Naive thymus-derived CD4-positive, alpha-beta T cell (primary cell): ENCODE measurements at regions of chr9 and their contacts with region 1.

Region 1: DNA sequence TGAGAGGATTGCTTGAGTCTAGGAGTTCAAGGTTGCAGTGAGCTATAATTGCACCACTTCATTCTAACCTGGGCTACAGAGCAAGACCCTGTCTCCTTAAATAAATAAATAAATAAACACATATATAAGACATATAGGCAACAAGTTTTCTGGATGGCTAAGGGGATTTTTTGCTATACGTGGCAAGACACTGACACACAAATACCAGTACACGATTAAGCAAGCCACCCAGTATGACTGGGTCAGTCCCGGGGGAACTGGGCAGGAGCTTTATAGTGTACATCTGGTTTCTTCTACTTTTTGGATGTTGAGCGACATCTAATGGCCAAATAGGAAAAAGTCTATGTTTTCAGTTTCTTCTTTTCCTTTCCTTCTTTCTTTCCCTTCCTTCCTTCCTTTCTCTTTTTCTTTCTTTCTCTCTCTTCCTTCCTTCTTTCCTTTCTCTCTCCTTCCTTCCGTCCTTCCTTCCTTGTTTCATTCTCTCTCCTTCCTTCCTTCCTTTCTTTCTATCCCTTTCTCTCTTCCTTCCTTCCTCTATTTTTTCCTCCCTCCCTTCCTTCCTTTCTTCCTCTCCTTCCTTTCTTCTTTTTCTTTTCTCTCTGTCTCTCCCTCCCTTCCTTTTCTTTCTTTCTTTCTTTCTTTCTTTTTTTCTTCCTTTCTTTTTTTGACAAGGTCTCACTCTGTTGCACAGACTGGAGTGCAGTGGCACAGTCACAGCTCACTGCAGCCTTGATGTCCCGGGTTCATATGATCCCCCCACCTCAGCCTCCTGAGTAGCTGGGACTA is 47.0 kb upstream of the PLIN2 start:
- DNase-seq: peak; percentile 11 to 51 (median 37)
- ATAC-seq: peak; percentile 91
- H3K4me3 ChIP-seq: no peak overlapping the region
- H3K4me3 Mint-ChIP-seq: peak overlapping the region in 3 of 10 donors; percentile 14 to 70 (median 63)
- H3K27ac ChIP-seq: no peak overlapping the region
- H3K27ac Mint-ChIP-seq: peak overlapping the region in 5 of 9 donors; percentile 52 to 84 (median 62)
- H3K4me1 ChIP-seq: peaks cover 5 to 16% of the 10 kb centered on the region in 2 donors
- H3K4me1 Mint-ChIP-seq: peaks cover 25 to 39% (median 31%) of the 10 kb centered on the region in 7 donors
- H3K27me3 ChIP-seq: no peaks in the 10 kb centered on the region
- H3K27me3 Mint-ChIP-seq: no peaks in the 10 kb centered on the region

Region 2: GRCh38 chr9:18255158-18255629 is 919.1 kb before region 1 on chr9:
- CTCF ChIA-PET with region 1: no interaction called
- POLR2A ChIA-PET with region 1: no interaction called
- intact Hi-C with region 1: loop called in 1 of 2 experiments (anchors 5 kb)
- DNase-seq: peak; percentile 30 to 72 (median 57)
- ATAC-seq: peak; percentile 87
- H3K4me3 ChIP-seq: no peak overlapping the region
- H3K4me3 Mint-ChIP-seq: no peak overlapping the region
- H3K27ac ChIP-seq: no peak overlapping the region
- H3K27ac Mint-ChIP-seq: no peak overlapping the region
- H3K4me1 ChIP-seq: no peaks in the 10 kb centered on the region
- H3K4me1 Mint-ChIP-seq: peaks cover 0 to 6% (median 0%) of the 10 kb centered on the region in 7 donors
- H3K27me3 ChIP-seq: no peaks in the 10 kb centered on the region
- H3K27me3 Mint-ChIP-seq: peaks cover 11 to 16% (median 11%) of the 10 kb centered on the region in 5 donors

Region 3: DNA sequence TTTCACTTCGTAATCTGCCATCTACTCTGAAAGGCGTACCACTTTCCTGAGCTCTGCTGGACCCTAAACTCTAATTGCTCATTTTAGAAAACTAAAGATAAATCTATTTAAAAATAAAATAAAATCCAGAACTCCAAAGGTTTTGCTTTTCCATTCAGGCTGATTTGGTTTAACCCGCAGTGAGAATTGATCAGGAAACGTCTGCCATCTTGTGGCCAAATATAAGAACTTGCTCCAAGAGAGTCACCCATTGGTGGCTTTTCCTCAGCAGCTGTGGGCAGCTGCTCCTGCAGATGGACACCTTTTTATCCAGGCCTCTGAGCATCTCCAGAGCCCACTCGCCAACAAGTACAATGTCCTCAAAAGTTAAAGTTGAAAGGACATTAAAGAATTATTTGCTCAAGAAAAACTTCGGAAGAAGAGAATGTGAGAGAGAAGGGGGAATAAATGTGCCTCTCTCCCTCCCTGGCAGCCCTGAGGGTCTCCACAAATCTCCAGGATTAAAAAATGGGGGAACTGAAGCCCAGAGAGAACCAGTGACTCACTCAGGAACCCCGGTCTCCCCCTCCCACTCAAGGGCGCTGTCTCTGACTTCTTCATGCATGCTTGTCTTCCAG is 145.4 kb before region 1 on chr9:
- CTCF ChIA-PET with region 1: interaction called, 13 read pairs
- POLR2A ChIA-PET with region 1: no interaction called
- intact Hi-C with region 1: loop called in 1 of 2 experiments (anchors 1 kb)
- DNase-seq: peak in 5 of 9 donors; percentile 17 to 37 (median 34)
- ATAC-seq: peak; percentile 54
- H3K4me3 ChIP-seq: no peak overlapping the region
- H3K4me3 Mint-ChIP-seq: no peak overlapping the region
- H3K27ac ChIP-seq: no peak overlapping the region
- H3K27ac Mint-ChIP-seq: no peak overlapping the region
- H3K4me1 ChIP-seq: no peaks in the 10 kb centered on the region
- H3K4me1 Mint-ChIP-seq: peaks cover 0 to 8% (median 0%) of the 10 kb centered on the region in 7 donors
- H3K27me3 ChIP-seq: no peaks in the 10 kb centered on the region
- H3K27me3 Mint-ChIP-seq: peaks cover 11 to 19% (median 13%) of the 10 kb centered on the region in 5 donors

Region 4: DNA sequence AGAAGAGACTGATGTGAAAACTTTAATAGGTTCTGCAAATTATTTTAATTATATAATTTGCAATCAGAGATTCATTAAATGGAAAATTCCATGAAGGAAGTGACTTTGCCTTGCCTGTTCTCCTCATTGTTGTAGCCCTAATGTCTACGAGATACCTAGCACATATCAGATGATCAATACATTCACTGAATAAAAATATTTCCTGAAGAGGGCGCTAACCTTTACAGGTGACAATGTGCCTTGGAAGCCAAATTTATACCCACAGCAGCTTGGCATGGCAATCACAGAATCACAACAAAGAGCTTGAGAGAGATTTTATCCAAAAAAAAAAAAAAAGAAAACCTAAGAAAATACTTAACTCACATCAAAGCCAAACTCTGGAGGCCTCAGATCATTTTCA is 89.0 kb before region 1 on chr9:
- CTCF ChIA-PET with region 1: interaction called, 36 read pairs
- POLR2A ChIA-PET with region 1: interaction called, 6 read pairs
- intact Hi-C with region 1: loop called (anchors 1 kb)
- DNase-seq: peak in 7 of 9 donors; percentile 31 to 60 (median 52)
- ATAC-seq: peak; percentile 83
- H3K4me3 ChIP-seq: no peak overlapping the region
- H3K4me3 Mint-ChIP-seq: no peak overlapping the region
- H3K27ac ChIP-seq: no peak overlapping the region
- H3K27ac Mint-ChIP-seq: no peak overlapping the region
- H3K4me1 ChIP-seq: no peaks in the 10 kb centered on the region
- H3K4me1 Mint-ChIP-seq: peaks cover 0 to 7% (median 5%) of the 10 kb centered on the region in 7 donors
- H3K27me3 ChIP-seq: no peaks in the 10 kb centered on the region
- H3K27me3 Mint-ChIP-seq: no peaks in the 10 kb centered on the region

Region 5: DNA sequence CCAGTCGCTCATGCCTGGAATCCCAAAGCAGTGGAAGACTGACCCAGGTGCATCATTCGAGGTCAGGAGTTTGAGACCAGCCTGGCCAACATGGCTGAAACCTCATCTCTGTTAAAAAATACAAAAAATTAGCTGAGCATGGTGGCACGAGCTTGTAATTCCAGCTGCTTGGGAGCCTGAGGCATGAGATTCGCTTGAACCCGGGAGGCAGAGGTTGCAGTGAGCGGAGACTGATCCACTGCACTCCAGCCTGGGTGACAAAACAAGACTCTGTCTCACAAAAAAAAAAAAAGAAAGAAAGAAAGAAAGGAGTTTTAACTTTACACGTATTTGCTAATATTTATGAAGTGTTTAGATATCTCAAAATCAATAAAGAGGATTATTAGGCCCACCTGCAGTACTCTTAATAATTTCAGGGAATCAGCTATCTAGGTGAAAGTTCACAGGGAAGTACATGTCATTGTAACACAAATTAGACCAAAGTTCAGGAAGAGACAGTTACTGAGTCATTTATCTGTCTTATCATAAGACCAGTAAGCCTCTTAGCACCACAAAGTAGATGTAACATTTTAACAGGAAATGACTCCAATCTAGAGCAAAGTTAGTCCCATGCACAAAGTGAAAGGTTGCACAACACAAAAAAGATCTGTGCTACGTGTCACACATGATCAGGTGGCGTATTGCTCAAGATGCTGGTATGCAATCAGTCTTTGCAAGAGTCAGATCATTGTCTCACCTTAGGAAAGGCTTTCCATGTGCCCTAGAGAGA is 12.9 kb before region 1 on chr9:
- CTCF ChIA-PET with region 1: interaction called, 3 read pairs
- POLR2A ChIA-PET with region 1: no interaction called
- intact Hi-C with region 1: loop called in 1 of 2 experiments (anchors 1 kb)
- DNase-seq: peak in 8 of 9 donors; percentile 25 to 63 (median 37)
- ATAC-seq: peak; percentile 94
- H3K4me3 ChIP-seq: no peak overlapping the region
- H3K4me3 Mint-ChIP-seq: peak overlapping the region; percentile 26 to 77 (median 53)
- H3K27ac ChIP-seq: peak overlapping the region; percentile 12
- H3K27ac Mint-ChIP-seq: peak overlapping the region; percentile 72 to 96 (median 81)
- H3K4me1 ChIP-seq: peaks cover 6 to 12% of the 10 kb centered on the region in 2 donors
- H3K4me1 Mint-ChIP-seq: peaks cover 12 to 27% (median 19%) of the 10 kb centered on the region in 7 donors
- H3K27me3 ChIP-seq: no peaks in the 10 kb centered on the region
- H3K27me3 Mint-ChIP-seq: no peaks in the 10 kb centered on the region